Activated T-helper 1 cell treated with anti-CD3 and anti-CD28 coated beads, Interleukin-12 subunit alpha, Interleukin-12 subunit beta, Interleukin-2, Interleukin-4 antibody, amounts not matched to agents 30 ng/mL and 10 ng/mL and 1 ng/mL, durations not matched to agents 14 hours and 24 hours and 36 hours (primary cell): ENCODE measurements at regions of chr7 and their contacts with region 1.

Region 1: GRCh38 chr7:100081535-100082102 is at the start of gene ZNF3:
- DNase-seq: peak; percentile 98
- H3K4me3 Mint-ChIP-seq: peak within 1 kb of the TSS; percentile 89
- H3K27ac Mint-ChIP-seq: peak within 1 kb of the TSS; percentile 92
- H3K4me1 Mint-ChIP-seq: peaks cover 31% of the 10 kb centered on the region
- H3K27me3 Mint-ChIP-seq: peaks cover 4% of the 10 kb centered on the region
- total RNA-seq, gene ZNF3: 24.6 and 26.1 TPM in 2 replicates

Region 2: DNA sequence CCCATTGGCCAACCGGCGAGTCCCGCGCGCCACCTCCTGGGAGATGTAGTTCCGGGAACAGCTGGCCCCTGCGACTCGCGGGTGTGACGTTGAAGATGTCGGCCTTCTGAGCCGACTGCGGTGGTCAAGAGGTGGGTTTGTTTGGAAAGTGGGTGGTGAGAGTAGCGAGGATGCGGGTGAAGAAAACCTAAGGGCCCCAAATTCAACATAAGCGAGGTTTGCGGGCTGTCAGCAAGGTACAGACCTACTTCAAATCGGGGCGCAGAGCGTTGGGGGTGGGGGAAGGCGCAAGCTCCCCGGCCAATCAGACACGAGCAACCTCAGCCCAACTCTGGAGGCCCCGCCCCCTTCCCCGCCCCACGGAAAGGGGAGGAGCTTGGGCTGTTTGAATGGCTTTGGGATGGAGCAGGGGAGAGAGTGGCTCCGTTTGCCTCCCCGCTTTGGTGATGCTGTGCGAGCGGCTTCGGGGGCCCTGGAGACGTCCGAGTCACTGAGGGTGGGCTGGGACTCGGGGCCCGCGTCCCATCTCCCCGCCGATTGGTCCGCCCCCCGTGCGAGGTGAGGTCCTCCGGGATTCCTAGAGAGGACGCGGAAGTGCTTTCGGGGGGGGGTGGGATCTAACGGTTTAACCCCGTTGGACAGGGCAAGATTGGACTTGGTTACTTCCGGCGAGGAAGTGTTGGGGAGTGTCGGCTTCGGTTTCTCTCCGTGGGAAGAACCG is 576.9 kb before region 1 on chr7 and contains the start of gene ZKSCAN5:
- intact Hi-C with region 1: loop called (anchors 5 kb)
- DNase-seq: peak; percentile 96
- H3K4me3 Mint-ChIP-seq: peak within 1 kb of the TSS; percentile 90
- H3K27ac Mint-ChIP-seq: peak within 1 kb of the TSS; percentile 96
- H3K4me1 Mint-ChIP-seq: peaks cover 19% of the 10 kb centered on the region
- H3K27me3 Mint-ChIP-seq: no peaks in the 10 kb centered on the region
- total RNA-seq, gene ZKSCAN5: 8.0 and 8.1 TPM in 2 replicates

Region 3: GRCh38 chr7:99997545-99998137 is 84.0 kb before region 1 on chr7:
- intact Hi-C with region 1: loop called (anchors 1 kb)
- DNase-seq: peak; percentile 69
- H3K4me3 Mint-ChIP-seq: peak overlapping the region; percentile 77
- H3K27ac Mint-ChIP-seq: peak overlapping the region; percentile 89
- H3K4me1 Mint-ChIP-seq: peaks cover 10% of the 10 kb centered on the region
- H3K27me3 Mint-ChIP-seq: peaks cover 5% of the 10 kb centered on the region

Region 4: GRCh38 chr7:100049441-100050311 is 31.9 kb before region 1 on chr7 and contains the start of gene ZSCAN21:
- intact Hi-C with region 1: loop called (anchors 1 kb)
- DNase-seq: peak; percentile 79
- H3K4me3 Mint-ChIP-seq: peak within 1 kb of the TSS; percentile 88
- H3K27ac Mint-ChIP-seq: peak within 1 kb of the TSS; percentile 92
- H3K4me1 Mint-ChIP-seq: peaks cover 13% of the 10 kb centered on the region
- H3K27me3 Mint-ChIP-seq: peaks cover 2% of the 10 kb centered on the region
- total RNA-seq, gene ZSCAN21: 6.8 and 9.8 TPM in 2 replicates

Region 5: GRCh38 chr7:100126931-100127865 is 45.6 kb after region 1 on chr7 and contains the start of gene MBLAC1:
- intact Hi-C with region 1: loop called (anchors 1 kb)
- DNase-seq: peak; percentile 85
- H3K4me3 Mint-ChIP-seq: peak within 1 kb of the TSS; percentile 94
- H3K27ac Mint-ChIP-seq: peak within 1 kb of the TSS; percentile 95
- H3K4me1 Mint-ChIP-seq: peaks cover 20% of the 10 kb centered on the region
- H3K27me3 Mint-ChIP-seq: no peaks in the 10 kb centered on the region
- total RNA-seq, gene MBLAC1: 4.1 and 5.5 TPM in 2 replicates